Mammary epithelial cell (primary cell): ENCODE measurements at regions of chr10 and their contacts with region 1.

Region 1: GRCh38 chr10:91298224-91298871 is 77.9 kb downstream of the PCGF5 start:
- DNase-seq: peak; percentile 69
- H3K4me3 ChIP-seq: peak overlapping the region in 2 of 3 experiments; percentile 18 to 47
- H3K27ac ChIP-seq: no peak overlapping the region
- H3K4me1 ChIP-seq: peaks cover 5% of the 10 kb centered on the region
- H3K27me3 ChIP-seq: no peaks in the 10 kb centered on the region
- CTCF ChIP-seq: peak; percentile 83 to 99

Region 2: GRCh38 chr10:90912174-90912573 is 386.2 kb before region 1 on chr10:
- CTCF ChIA-PET with region 1: interaction called, 4 read pairs
- dilution Hi-C with region 1: no loop called
- in situ Hi-C with region 1: no loop called
- intact Hi-C with region 1: loop called (anchors 5 kb)
- DNase-seq: peak; percentile 60
- H3K4me3 ChIP-seq: peak overlapping the region in 1 of 3 experiments; percentile 3
- H3K27ac ChIP-seq: peak overlapping the region; percentile 30
- H3K4me1 ChIP-seq: peaks cover 14% of the 10 kb centered on the region
- H3K27me3 ChIP-seq: no peaks in the 10 kb centered on the region
- CTCF ChIP-seq: no peak

Region 3: DNA sequence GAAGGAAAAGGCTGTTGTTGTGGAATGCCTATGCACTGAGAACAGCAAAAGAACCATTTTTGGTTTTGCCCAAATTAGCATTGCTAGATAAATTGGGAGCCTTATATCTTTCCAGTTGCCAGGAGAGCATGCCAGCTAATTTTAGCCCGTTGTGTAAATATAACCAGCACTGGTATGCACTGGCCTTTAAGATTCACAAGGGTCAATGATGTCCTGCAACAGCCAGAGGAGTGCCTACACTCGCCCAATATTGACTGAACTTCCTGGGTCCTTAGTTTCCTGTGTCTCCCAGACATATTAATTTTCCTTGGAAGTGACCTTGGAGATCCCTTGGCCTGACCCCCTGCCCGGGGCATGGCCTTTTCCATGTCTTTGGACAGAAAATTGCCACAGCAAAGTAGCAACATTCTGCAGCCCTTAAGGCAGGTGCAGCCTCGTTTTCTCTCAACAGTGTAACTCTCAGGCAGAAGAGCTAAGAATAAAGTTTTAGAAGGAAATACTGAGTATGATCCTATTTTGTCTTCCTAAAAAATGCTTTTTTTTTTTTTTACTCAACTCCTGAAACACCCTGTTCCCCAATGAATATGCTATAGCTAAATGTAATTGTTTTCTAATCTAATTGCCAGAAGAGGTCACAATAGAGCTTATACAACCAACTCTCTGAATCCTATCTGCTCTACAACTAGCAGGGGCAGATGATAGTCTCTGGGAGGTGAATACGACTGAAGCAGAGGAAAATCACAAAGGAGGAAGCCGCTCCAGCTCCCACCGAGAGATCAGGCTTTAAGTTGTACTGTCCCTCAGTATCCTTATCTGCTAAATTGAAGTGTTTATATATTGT is 209.8 kb before region 1 on chr10:
- CTCF ChIA-PET with region 1: interaction called, 15 read pairs
- dilution Hi-C with region 1: no loop called
- in situ Hi-C with region 1: no loop called
- intact Hi-C with region 1: no loop called
- DNase-seq: peak; percentile 4
- H3K4me3 ChIP-seq: no peak overlapping the region
- H3K27ac ChIP-seq: no peak overlapping the region
- H3K4me1 ChIP-seq: no peaks in the 10 kb centered on the region
- H3K27me3 ChIP-seq: no peaks in the 10 kb centered on the region
- CTCF ChIP-seq: peak in 1 of 2 donors; percentile 34

Region 4: DNA sequence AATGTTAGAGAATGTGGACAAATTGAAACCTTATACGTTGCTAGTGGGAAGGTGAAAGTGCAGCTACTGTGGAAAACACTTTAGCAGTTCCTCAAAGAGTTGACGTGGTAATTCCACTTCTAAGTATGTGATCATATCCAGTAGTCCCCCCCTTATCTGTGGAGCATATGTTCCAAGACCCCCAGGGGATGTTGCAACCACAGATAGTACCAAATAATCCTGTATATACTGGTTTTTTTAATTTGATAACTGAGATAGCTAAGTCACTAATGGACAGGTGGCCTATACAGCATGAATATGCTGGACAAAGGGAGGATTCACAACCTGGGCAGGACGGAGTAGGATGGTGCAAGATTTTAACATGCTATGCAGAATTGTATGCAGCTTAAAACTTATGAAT is 41.0 kb before region 1 on chr10:
- CTCF ChIA-PET with region 1: no interaction called
- dilution Hi-C with region 1: no loop called
- in situ Hi-C with region 1: no loop called
- intact Hi-C with region 1: no loop called
- DNase-seq: no peak
- H3K4me3 ChIP-seq: no peak overlapping the region
- H3K27ac ChIP-seq: no peak overlapping the region
- H3K4me1 ChIP-seq: no peaks in the 10 kb centered on the region
- H3K27me3 ChIP-seq: no peaks in the 10 kb centered on the region
- CTCF ChIP-seq: no peak

Region 5: DNA sequence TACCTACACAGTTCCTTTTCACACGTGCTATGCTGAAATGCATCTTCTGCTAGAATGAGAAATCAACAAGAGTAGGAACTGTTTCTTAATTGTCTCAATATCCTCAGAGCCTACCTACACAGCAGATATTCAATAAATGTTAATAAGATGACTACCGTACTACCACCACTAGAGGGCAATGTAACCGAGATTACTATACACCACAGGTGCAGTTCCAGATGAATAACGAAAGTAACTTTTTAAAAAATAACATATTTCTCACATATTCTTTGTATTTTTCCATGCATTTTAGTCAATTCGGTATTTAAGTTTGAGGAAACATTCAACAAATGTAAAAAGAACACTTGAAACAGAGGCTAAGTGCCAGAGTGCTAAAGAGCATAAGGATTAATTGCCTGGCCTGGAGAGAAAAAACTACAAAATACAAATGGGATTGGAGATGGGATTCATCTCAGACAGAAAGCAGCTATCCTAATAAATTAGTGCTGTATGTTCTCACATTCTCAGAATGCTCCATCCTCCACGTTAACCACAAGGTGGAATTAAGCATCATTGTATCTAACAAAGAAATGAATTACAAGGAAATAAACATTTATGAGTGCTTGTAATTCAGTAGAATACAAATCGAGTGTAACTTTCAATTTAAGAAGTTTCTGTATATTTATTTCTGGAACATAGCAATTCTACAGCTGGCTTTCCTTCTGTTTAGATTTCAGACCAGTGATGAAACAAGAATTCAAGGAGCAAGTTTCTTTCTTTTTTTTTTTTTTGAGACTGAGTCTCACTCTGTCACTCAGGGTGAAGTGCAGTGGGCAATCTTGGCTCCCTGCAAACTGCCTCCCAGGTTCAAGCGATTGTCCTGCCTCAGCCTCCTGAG is 91.5 kb after region 1 on chr10:
- CTCF ChIA-PET with region 1: interaction called, 4 read pairs
- dilution Hi-C with region 1: no loop called
- in situ Hi-C with region 1: no loop called
- intact Hi-C with region 1: loop called (anchors 5 kb)
- DNase-seq: peak; percentile 36
- H3K4me3 ChIP-seq: no peak overlapping the region
- H3K27ac ChIP-seq: no peak overlapping the region
- H3K4me1 ChIP-seq: no peaks in the 10 kb centered on the region
- H3K27me3 ChIP-seq: peaks cover 2% of the 10 kb centered on the region
- CTCF ChIP-seq: peak; percentile 54 to 55

Region 6: DNA sequence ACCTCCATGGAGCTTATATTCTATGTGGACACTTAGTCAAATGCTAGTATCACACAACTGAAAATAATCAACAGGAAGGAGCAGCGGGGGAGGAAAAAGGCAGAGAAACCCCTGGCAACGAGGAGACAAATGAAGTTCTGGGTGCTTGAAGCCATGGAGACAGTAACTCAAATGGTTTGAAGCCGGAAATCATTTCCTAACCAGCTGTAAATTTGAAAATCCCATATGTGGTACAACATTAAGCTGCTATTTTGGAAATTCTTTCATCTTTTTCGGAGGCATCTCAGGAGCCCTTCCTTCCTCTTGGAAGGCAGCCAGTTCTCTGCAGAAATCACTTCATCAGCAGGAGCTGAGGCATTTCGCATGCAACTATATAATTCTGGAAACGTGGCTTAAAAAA is 243.1 kb after region 1 on chr10:
- CTCF ChIA-PET with region 1: no interaction called
- dilution Hi-C with region 1: no loop called
- in situ Hi-C with region 1: no loop called
- intact Hi-C with region 1: no loop called
- DNase-seq: no peak
- H3K4me3 ChIP-seq: no peak overlapping the region
- H3K27ac ChIP-seq: no peak overlapping the region
- H3K4me1 ChIP-seq: peaks cover 7% of the 10 kb centered on the region
- H3K27me3 ChIP-seq: no peaks in the 10 kb centered on the region
- CTCF ChIP-seq: no peak

Region 7: GRCh38 chr10:91551856-91552255 is 253.5 kb after region 1 on chr10:
- CTCF ChIA-PET with region 1: interaction called, 3 read pairs
- dilution Hi-C with region 1: no loop called
- in situ Hi-C with region 1: no loop called
- intact Hi-C with region 1: loop called (anchors 2 kb)
- DNase-seq: peak; percentile 25
- H3K4me3 ChIP-seq: no peak overlapping the region
- H3K27ac ChIP-seq: no peak overlapping the region
- H3K4me1 ChIP-seq: peaks cover 17% of the 10 kb centered on the region
- H3K27me3 ChIP-seq: no peaks in the 10 kb centered on the region
- CTCF ChIP-seq: peak; percentile 37 to 58

Region 8: GRCh38 chr10:91745074-91745832 is 446.9 kb after region 1 on chr10:
- CTCF ChIA-PET with region 1: no interaction called
- dilution Hi-C with region 1: no loop called
- in situ Hi-C with region 1: loop called in 1 of 2 experiments (anchors 25 kb)
- intact Hi-C with region 1: loop called (anchors 1 kb)
- DNase-seq: peak; percentile 55
- H3K4me3 ChIP-seq: peak overlapping the region in 2 of 3 experiments; percentile 21 to 34
- H3K27ac ChIP-seq: no peak overlapping the region
- H3K4me1 ChIP-seq: peaks cover 3% of the 10 kb centered on the region
- H3K27me3 ChIP-seq: peaks cover 3% of the 10 kb centered on the region
- CTCF ChIP-seq: peak; percentile 66 to 80